ENCODE measurements at regions of chr5 and their contacts with region 1.

Region 1: DNA sequence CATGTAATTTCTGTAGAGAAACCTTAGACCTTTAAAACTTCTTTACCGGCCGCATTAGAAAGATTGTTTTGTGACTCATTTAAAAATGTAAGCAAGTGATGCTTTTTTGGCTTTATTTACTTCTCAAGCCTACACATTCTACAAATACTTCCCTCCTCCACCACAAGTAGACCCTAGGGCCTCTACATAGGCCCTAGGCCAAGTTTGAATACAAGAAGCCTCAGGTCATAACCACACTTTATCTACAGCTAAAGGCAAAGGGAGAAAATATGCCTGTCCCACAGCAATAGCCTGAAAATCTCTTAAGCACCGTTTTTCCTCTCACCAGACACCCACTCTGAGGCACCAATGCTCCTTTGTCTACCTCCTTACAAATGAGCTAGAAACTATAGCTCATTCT is 53.9 kb downstream of the CSNK1A1 start:
- DNase-seq: no peak
- H3K4me3 Mint-ChIP-seq: no peak overlapping the region
- H3K27ac Mint-ChIP-seq: no peak overlapping the region
- H3K4me1 Mint-ChIP-seq: no peaks in the 10 kb centered on the region
- H3K27me3 Mint-ChIP-seq: no peaks in the 10 kb centered on the region

Region 2: GRCh38 chr5:149114403-149115312 is 382.7 kb before region 1 on chr5:
- intact Hi-C with region 1: no loop called
- DNase-seq: peak; percentile 3
- H3K4me3 Mint-ChIP-seq: no peak overlapping the region
- H3K27ac Mint-ChIP-seq: no peak overlapping the region
- H3K4me1 Mint-ChIP-seq: no peaks in the 10 kb centered on the region
- H3K27me3 Mint-ChIP-seq: peaks cover 29% of the 10 kb centered on the region

Region 3: GRCh38 chr5:149254506-149254905 is 242.9 kb before region 1 on chr5:
- intact Hi-C with region 1: no loop called
- DNase-seq: no peak
- H3K4me3 Mint-ChIP-seq: no peak overlapping the region
- H3K27ac Mint-ChIP-seq: no peak overlapping the region
- H3K4me1 Mint-ChIP-seq: no peaks in the 10 kb centered on the region
- H3K27me3 Mint-ChIP-seq: peaks cover 2% of the 10 kb centered on the region

Region 4: GRCh38 chr5:149284501-149284900 is 212.9 kb before region 1 on chr5:
- intact Hi-C with region 1: no loop called
- DNase-seq: no peak
- H3K4me3 Mint-ChIP-seq: no peak overlapping the region
- H3K27ac Mint-ChIP-seq: no peak overlapping the region
- H3K4me1 Mint-ChIP-seq: no peaks in the 10 kb centered on the region
- H3K27me3 Mint-ChIP-seq: peaks cover 19% of the 10 kb centered on the region

Region 5: DNA sequence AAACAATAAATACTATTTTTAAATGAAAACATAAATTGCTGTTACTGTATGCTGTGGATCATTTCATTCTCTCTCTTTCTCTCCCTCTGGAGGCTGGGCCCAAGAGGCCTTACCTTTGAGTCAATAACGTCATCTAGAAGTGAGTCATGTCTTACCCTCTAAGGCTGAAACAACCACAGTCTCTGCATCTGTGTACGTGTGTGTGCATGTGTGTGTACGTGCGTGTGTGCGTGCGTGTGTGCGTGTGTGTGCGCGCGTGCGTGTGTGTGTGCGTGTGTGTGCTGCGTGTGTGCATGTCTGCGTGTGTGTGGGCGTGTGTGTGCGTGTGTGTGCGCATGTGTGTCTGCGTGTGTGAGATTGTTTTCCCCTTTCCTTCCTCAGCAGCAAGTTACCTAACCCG is 104.6 kb before region 1 on chr5:
- intact Hi-C with region 1: no loop called
- DNase-seq: no peak
- H3K4me3 Mint-ChIP-seq: no peak overlapping the region
- H3K27ac Mint-ChIP-seq: no peak overlapping the region
- H3K4me1 Mint-ChIP-seq: no peaks in the 10 kb centered on the region
- H3K27me3 Mint-ChIP-seq: peaks cover 11% of the 10 kb centered on the region

Region 6: DNA sequence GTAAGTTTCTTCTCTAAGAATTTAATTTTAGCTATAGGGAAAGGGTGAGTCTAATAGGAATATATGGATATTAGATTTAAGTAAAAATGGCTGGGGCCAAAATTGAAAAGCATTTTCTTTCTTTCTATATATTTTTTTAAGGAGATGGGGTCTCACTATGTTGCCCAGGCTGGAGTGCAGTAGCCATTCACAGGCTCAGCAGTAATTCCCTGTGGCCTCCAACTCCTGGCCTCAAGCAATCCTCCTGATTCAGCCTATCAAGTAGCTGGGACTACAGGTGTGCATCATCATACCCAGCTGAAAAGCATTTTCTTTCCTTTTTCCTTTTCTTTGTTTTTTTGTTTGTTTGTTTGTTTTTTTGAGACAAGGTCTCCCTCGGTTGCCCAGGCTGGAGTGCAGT is 12.8 kb after region 1 on chr5:
- intact Hi-C with region 1: loop called (anchors 2 kb)
- DNase-seq: no peak
- H3K4me3 Mint-ChIP-seq: no peak overlapping the region
- H3K27ac Mint-ChIP-seq: no peak overlapping the region
- H3K4me1 Mint-ChIP-seq: peaks cover 24% of the 10 kb centered on the region
- H3K27me3 Mint-ChIP-seq: no peaks in the 10 kb centered on the region